Vagina (tissue), 2 donors: ENCODE measurements at regions of chr9 and their contacts with region 1.

Region 1: DNA sequence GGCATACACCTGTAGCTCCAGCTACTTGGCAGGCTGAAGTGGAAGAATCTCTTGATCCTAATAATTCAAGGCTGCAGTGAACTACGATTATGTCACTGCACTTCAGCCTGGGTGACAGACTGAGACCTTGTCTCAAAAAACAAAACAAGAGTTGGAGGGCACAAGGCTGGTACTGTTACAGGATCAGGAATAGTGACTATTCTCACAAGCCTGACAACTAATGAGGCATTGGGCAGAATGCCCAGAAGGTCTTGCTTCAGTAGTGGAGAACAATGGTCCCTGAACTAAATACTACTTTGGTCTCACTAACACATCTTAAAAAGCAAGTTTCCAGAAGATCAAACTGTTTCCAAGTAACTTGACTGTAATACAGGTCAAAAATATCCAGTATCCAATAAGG is 182.9 kb upstream of the RFX3 start:
- DNase-seq: no peak
- H3K4me3 ChIP-seq: no peak overlapping the region
- H3K27ac ChIP-seq: no peak overlapping the region
- H3K4me1 ChIP-seq: no peaks in the 10 kb centered on the region
- H3K27me3 ChIP-seq: no peaks in the 10 kb centered on the region
- CTCF ChIP-seq: no peak
- POLR2A ChIP-seq: no peak

Region 2: GRCh38 chr9:3768698-3769458 is 60.1 kb after region 1 on chr9:
- intact Hi-C with region 1: no loop called
- DNase-seq: no peak
- H3K4me3 ChIP-seq: no peak overlapping the region
- H3K27ac ChIP-seq: peak overlapping the region; percentile 29
- H3K4me1 ChIP-seq: peaks cover 6% of the 10 kb centered on the region
- H3K27me3 ChIP-seq: no peaks in the 10 kb centered on the region
- CTCF ChIP-seq: no peak
- POLR2A ChIP-seq: no peak

Region 3: GRCh38 chr9:5375091-5375490 is 1666.3 kb after region 1 on chr9:
- intact Hi-C with region 1: loop called (anchors 10 kb)
- DNase-seq: no peak
- H3K4me3 ChIP-seq: no peak overlapping the region
- H3K27ac ChIP-seq: no peak overlapping the region
- H3K4me1 ChIP-seq: peaks cover 11% of the 10 kb centered on the region
- H3K27me3 ChIP-seq: no peaks in the 10 kb centered on the region
- CTCF ChIP-seq: no peak
- POLR2A ChIP-seq: no peak